Left ventricle myocardium inferior (tissue), 1 donor: ENCODE measurements at regions of chr1 and their contacts with region 1.

Region 1: GRCh38 chr1:183480971-183481441 is 8.7 kb downstream of the SMG7 start:
- DNase-seq: no peak
- H3K4me3 ChIP-seq: no peak overlapping the region
- H3K27ac ChIP-seq: peak overlapping the region; percentile 14
- H3K4me1 ChIP-seq: peaks cover 97% of the 10 kb centered on the region
- H3K27me3 ChIP-seq: no peaks in the 10 kb centered on the region
- CTCF ChIP-seq: no peak

Region 2: GRCh38 chr1:183515018-183515689 is 34.1 kb after region 1 on chr1:
- intact Hi-C with region 1: loop called (anchors 5 kb)
- DNase-seq: no peak
- H3K4me3 ChIP-seq: no peak overlapping the region
- H3K27ac ChIP-seq: no peak overlapping the region
- H3K4me1 ChIP-seq: peaks cover 32% of the 10 kb centered on the region
- H3K27me3 ChIP-seq: no peaks in the 10 kb centered on the region
- CTCF ChIP-seq: no peak